Endothelial cell of umbilical vein (primary cell): ENCODE measurements at regions of chr6 and their contacts with region 1.

Region 1: GRCh38 chr6:125480571-125480970 is 178.8 kb upstream of the HDDC2 start:
- DNase-seq: no peak
- H3K4me3 ChIP-seq: no peak overlapping the region
- H3K27ac ChIP-seq: no peak overlapping the region
- H3K4me1 ChIP-seq: no peaks in the 10 kb centered on the region
- H3K27me3 ChIP-seq: peaks cover 6 to 16% of the 10 kb centered on the region in 2 experiments
- CTCF ChIP-seq: no peak
- POLR2A ChIP-seq: no peak

Region 2: DNA sequence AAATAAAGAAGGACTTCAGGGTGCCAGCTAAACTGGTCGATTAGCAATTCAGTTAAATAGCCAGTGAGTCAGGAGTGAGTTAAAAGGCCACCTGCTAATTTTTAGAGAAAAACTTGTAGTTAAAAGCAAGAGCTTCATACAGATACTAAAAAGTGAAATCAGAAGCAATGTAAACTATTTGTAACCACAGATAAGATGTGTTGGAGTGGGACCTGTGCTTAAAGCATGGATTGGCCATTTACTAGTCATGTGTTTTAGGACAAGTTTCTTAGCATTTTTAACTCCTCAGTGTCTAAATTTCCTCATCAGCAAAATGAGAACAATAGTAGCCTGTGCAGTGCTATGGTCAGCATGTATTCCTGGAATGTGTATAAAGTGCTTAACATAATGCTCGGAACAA is 155.0 kb before region 1 on chr6:
- CTCF ChIA-PET with region 1: no interaction called
- POLR2A ChIA-PET with region 1: no interaction called
- dilution Hi-C with region 1: no loop called
- intact Hi-C with region 1: loop called (anchors 5 kb)
- DNase-seq: no peak
- H3K4me3 ChIP-seq: no peak overlapping the region
- H3K27ac ChIP-seq: no peak overlapping the region
- H3K4me1 ChIP-seq: no peaks in the 10 kb centered on the region
- H3K27me3 ChIP-seq: peaks cover 9 to 14% of the 10 kb centered on the region in 2 experiments
- CTCF ChIP-seq: no peak
- POLR2A ChIP-seq: no peak

Region 3: DNA sequence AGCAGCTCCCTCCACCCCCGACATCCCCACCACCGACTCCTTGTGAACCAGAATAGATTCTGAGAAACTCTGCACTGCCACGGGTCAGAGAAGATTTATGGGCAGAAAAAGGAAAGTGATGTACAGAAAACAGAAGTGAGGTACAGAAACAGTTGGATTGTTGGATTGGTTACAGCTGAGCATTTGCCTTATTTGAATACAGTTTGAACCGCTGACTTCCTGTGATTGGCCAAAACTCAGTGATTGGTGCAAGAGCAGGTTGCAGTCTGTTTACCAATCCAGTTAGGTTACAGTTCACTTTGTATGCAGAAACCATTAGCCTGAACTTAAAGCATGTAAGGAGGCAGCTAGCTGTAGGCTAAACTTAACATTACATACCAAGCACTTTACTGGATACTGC is 47.6 kb before region 1 on chr6:
- CTCF ChIA-PET with region 1: no interaction called
- POLR2A ChIA-PET with region 1: no interaction called
- dilution Hi-C with region 1: no loop called
- intact Hi-C with region 1: no loop called
- DNase-seq: no peak
- H3K4me3 ChIP-seq: no peak overlapping the region
- H3K27ac ChIP-seq: no peak overlapping the region
- H3K4me1 ChIP-seq: no peaks in the 10 kb centered on the region
- H3K27me3 ChIP-seq: peaks cover 0 to 1% of the 10 kb centered on the region in 2 experiments
- CTCF ChIP-seq: no peak
- POLR2A ChIP-seq: no peak

Region 4: DNA sequence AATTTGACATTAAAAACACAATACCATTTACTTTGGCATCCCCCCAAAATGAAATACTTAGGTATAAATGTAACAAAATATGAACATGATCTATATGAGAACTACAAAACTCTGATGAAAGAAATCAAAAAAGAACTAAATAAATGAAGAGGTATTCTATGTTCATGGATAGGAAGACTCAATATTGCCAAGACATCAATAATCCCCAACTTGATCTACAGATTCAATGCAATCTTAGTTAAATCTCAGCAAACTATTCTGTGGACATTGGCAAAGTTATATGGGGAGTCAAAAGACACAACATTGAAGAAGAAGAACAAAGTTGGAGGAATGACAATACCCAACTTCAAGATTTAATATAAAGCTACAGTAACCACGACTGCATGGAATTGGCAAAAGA is 123.7 kb after region 1 on chr6:
- CTCF ChIA-PET with region 1: no interaction called
- POLR2A ChIA-PET with region 1: no interaction called
- dilution Hi-C with region 1: no loop called
- intact Hi-C with region 1: no loop called
- DNase-seq: no peak
- H3K4me3 ChIP-seq: no peak overlapping the region
- H3K27ac ChIP-seq: no peak overlapping the region
- H3K4me1 ChIP-seq: no peaks in the 10 kb centered on the region
- H3K27me3 ChIP-seq: peaks cover 8 to 15% of the 10 kb centered on the region in 2 experiments
- CTCF ChIP-seq: no peak
- POLR2A ChIP-seq: no peak